Calu3 (cell line): ENCODE measurements at regions of chr12 and their contacts with region 1.

Region 1: DNA sequence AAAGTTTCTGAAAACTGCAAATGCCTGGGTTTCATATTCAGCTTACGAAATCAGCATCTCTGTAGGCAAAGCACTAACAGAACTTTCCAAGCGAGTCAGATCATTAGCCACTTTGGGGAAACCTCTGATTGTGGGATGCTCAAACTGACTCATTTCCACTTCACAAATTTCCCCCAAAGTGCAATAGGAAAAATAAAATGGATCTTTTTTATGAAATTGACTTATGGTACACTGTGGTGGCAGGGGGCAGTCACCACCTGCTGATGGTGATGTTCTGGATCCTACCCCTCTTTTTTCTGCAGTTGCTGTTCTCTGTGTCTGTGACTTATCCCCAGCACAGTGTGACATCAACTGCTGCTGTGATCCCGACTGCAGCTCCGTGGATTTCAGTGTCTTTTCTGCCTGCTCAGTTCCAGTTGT is 5.6 kb downstream of the TCTN1 start:
- DNase-seq: no peak
- H3K4me3 Mint-ChIP-seq: no peak overlapping the region
- H3K27ac Mint-ChIP-seq: no peak overlapping the region
- H3K4me1 Mint-ChIP-seq: peaks cover 5% of the 10 kb centered on the region
- H3K27me3 Mint-ChIP-seq: no peaks in the 10 kb centered on the region
- CTCF ChIP-seq: no peak

Region 2: DNA sequence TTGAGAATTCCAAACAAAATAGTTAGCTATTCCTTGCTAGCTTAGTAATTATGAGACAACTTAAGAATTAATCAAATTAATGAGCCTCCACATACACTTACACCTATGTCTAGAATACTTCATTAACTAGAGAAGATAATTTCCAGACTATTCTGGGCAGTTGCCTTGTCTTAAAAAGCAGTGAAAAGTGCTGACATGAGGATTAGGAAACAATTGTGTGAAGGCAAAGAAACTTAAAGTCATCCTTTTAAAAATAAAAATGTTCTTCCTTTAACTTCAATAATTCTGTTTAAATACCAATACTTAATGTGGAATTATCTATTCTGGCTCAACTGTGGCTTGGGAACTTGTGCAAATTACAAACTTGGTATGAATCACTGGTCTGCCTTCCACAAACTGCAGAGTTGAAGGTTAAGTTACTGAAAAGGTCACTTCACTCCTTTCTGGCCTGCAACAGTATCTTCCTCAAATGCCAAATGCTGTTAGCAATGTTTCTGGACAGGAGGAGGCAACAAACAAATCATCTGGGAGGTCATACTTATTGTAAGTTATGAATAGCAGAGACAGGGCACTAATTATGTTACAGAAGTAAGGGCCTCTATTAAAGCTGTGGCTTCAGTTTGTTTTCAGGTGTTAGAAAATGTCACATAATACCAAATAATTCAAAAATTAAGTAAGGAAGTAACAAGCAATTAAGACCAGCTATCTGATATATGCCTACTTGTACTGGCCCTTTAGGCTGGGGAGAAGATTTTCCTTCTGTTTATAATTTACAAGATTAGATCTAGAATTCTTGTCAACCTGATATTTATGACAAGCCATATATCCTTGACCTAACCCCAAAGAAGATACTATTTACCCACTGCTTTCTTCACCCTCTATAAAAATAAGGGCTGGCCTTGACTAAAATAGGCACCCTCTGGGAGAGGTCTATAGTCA is 55.6 kb before region 1 on chr12:
- CTCF ChIA-PET with region 1: no interaction called
- intact Hi-C with region 1: no loop called
- DNase-seq: no peak
- H3K4me3 Mint-ChIP-seq: no peak overlapping the region
- H3K27ac Mint-ChIP-seq: no peak overlapping the region
- H3K4me1 Mint-ChIP-seq: peaks cover 36% of the 10 kb centered on the region
- H3K27me3 Mint-ChIP-seq: no peaks in the 10 kb centered on the region
- CTCF ChIP-seq: no peak

Region 3: GRCh38 chr12:110698171-110698902 is 78.8 kb after region 1 on chr12:
- CTCF ChIA-PET with region 1: no interaction called
- intact Hi-C with region 1: loop called (anchors 5 kb)
- DNase-seq: peak; percentile 86
- H3K4me3 Mint-ChIP-seq: no peak overlapping the region
- H3K27ac Mint-ChIP-seq: no peak overlapping the region
- H3K4me1 Mint-ChIP-seq: peaks cover 11% of the 10 kb centered on the region
- H3K27me3 Mint-ChIP-seq: no peaks in the 10 kb centered on the region
- CTCF ChIP-seq: peak; percentile 42